ENCODE measurements at regions of chr10 and their contacts with region 1.

Region 1: DNA sequence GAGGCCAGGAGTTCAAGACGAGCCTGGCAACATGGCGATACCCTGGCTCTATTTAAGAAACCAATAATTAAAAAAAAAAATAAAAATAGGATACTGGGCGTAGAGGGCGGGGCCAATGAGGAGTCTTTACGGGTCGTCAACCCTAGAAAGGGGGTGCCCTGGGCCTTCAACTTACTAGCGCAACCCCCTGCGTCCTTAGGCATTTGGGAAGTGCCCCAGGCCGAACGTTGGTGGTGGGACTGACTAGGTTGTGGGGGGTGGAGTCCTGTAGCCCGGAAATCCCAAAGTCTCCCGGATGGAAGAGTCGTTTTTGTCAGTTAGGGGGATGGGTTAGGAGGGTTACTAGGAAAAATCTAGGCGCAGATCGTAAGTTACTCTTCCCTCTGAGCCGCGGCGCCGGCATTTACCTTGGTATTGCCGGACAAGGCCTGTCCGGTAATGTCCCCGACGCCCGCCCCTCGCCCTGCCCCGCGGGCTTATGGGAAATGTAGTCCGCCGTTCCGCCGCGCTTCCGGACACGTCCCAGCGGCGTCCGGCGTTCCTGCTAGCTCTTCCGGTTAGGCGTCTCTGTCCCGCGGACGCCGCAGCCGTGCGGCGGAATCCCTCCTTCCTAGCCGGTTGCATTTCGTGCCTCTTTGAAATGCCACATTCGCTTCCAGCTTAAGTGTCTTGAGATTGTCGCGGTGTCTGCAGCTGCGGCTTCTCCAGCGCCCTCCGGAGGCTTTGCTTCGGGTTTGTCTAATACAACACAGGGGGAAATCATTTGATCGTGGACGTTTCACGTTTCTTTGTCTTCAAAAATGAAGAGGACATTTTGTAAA is 1.3 kb upstream of the ACBD5 start:
- DNase-seq: peak; percentile 75 to 95 (median 85)
- ATAC-seq: peak; percentile 64
- H3K4me3 ChIP-seq: peak overlapping the region; percentile 87 to 96
- H3K4me3 Mint-ChIP-seq: peak overlapping the region; percentile 91
- H3K27ac ChIP-seq: peak overlapping the region; percentile 84 to 96
- H3K27ac Mint-ChIP-seq: peak overlapping the region; percentile 98
- H3K4me1 ChIP-seq: peaks cover 26% of the 10 kb centered on the region
- H3K4me1 Mint-ChIP-seq: peaks cover 43% of the 10 kb centered on the region
- H3K27me3 ChIP-seq: no peaks in the 10 kb centered on the region
- H3K27me3 Mint-ChIP-seq: no peaks in the 10 kb centered on the region
- CTCF ChIP-seq: no peak

Region 2: GRCh38 chr10:26437637-26438461 is 804.0 kb before region 1 on chr10 and contains the start of gene APBB1IP:
- CTCF ChIA-PET with region 1: no interaction called
- POLR2A ChIA-PET with region 1: no interaction called
- intact Hi-C with region 1: loop called in 1 of 2 experiments (anchors 5 kb)
- DNase-seq: peak; percentile 28 to 79 (median 57)
- ATAC-seq: peak; percentile 43
- H3K4me3 ChIP-seq: peak within 1 kb of the TSS; percentile 85 to 94
- H3K4me3 Mint-ChIP-seq: peak within 1 kb of the TSS; percentile 93
- H3K27ac ChIP-seq: peak within 1 kb of the TSS; percentile 83 to 90
- H3K27ac Mint-ChIP-seq: peak within 1 kb of the TSS; percentile 98
- H3K4me1 ChIP-seq: peaks cover 40% of the 10 kb centered on the region
- H3K4me1 Mint-ChIP-seq: peaks cover 52% of the 10 kb centered on the region
- H3K27me3 ChIP-seq: no peaks in the 10 kb centered on the region
- H3K27me3 Mint-ChIP-seq: no peaks in the 10 kb centered on the region
- CTCF ChIP-seq: no peak
- total RNA-seq, gene APBB1IP: 36.4 to 36.8 TPM

Region 3: GRCh38 chr10:26681076-26681475 is 560.8 kb before region 1 on chr10:
- CTCF ChIA-PET with region 1: no interaction called
- POLR2A ChIA-PET with region 1: no interaction called
- intact Hi-C with region 1: no loop called
- DNase-seq: no peak
- ATAC-seq: no peak
- H3K4me3 ChIP-seq: no peak overlapping the region
- H3K4me3 Mint-ChIP-seq: no peak overlapping the region
- H3K27ac ChIP-seq: no peak overlapping the region
- H3K27ac Mint-ChIP-seq: no peak overlapping the region
- H3K4me1 ChIP-seq: peaks cover 36% of the 10 kb centered on the region
- H3K4me1 Mint-ChIP-seq: peaks cover 37% of the 10 kb centered on the region
- H3K27me3 ChIP-seq: no peaks in the 10 kb centered on the region
- H3K27me3 Mint-ChIP-seq: no peaks in the 10 kb centered on the region
- CTCF ChIP-seq: no peak

Region 4: GRCh38 chr10:26697163-26697921 is 544.5 kb before region 1 on chr10 and contains the start of gene PDSS1:
- CTCF ChIA-PET with region 1: no interaction called
- POLR2A ChIA-PET with region 1: no interaction called
- intact Hi-C with region 1: loop called in 1 of 2 experiments (anchors 5 kb)
- DNase-seq: peak; percentile 23 to 82 (median 60)
- ATAC-seq: peak; percentile 73
- H3K4me3 ChIP-seq: peak within 1 kb of the TSS; percentile 85 to 92
- H3K4me3 Mint-ChIP-seq: peak within 1 kb of the TSS; percentile 94
- H3K27ac ChIP-seq: peak within 1 kb of the TSS; percentile 69 to 81
- H3K27ac Mint-ChIP-seq: peak within 1 kb of the TSS; percentile 93
- H3K4me1 ChIP-seq: peaks cover 18% of the 10 kb centered on the region
- H3K4me1 Mint-ChIP-seq: peaks cover 35% of the 10 kb centered on the region
- H3K27me3 ChIP-seq: no peaks in the 10 kb centered on the region
- H3K27me3 Mint-ChIP-seq: no peaks in the 10 kb centered on the region
- CTCF ChIP-seq: no peak
- total RNA-seq, gene PDSS1: 3.4 to 3.7 TPM

Region 5: GRCh38 chr10:27155066-27155754 is 86.7 kb before region 1 on chr10 and contains the start of gene MASTL:
- CTCF ChIA-PET with region 1: interaction called, 10 read pairs
- POLR2A ChIA-PET with region 1: interaction called, 31 read pairs
- intact Hi-C with region 1: loop called (anchors 1 kb)
- DNase-seq: peak; percentile 90 to 98 (median 93)
- ATAC-seq: peak; percentile 82
- H3K4me3 ChIP-seq: peak within 1 kb of the TSS; percentile 84 to 98
- H3K4me3 Mint-ChIP-seq: peak within 1 kb of the TSS; percentile 99
- H3K27ac ChIP-seq: peak within 1 kb of the TSS; percentile 100
- H3K27ac Mint-ChIP-seq: peak within 1 kb of the TSS; percentile 100
- H3K4me1 ChIP-seq: peaks cover 27% of the 10 kb centered on the region
- H3K4me1 Mint-ChIP-seq: peaks cover 49% of the 10 kb centered on the region
- H3K27me3 ChIP-seq: no peaks in the 10 kb centered on the region
- H3K27me3 Mint-ChIP-seq: no peaks in the 10 kb centered on the region
- CTCF ChIP-seq: no peak
- total RNA-seq, gene MASTL: 33.4 to 33.6 TPM

Region 6: DNA sequence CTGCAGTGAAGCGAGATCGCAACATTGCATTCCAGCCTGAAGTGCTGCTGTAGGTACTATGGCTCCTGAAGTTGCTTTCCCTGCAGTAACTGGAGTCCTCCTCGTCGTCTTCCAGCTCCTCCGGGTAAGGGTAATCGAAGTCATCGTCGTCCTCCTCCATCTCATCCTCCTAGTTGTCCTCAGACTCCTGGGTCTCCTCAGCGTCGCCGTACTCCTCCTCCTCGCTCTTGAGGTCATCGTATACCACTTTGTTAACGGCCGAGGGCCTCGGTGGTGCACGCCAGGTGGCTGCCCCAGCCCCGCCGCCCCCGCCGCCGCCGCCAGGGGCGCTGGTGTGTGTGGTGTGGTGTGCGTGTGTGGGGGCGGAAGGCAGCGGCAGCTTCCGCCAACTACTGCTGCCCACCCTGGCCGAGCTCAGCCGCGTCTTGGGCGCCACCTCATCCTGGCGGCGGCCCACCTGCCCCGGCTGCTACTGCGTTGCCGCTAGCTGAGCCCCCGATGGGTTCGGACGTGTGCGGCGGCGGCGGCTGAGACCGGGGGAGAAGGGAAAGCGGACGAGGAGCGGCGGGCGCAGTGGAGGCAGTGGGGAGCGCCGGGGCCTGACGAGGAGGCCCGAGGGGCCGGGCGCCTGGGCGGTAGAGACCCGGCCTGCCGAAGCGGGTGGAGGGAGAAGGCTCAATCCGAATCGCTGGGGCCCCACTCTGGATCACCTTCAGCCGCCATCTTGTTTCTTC is 10.6 kb after region 1 on chr10:
- CTCF ChIA-PET with region 1: interaction called, 18 read pairs
- POLR2A ChIA-PET with region 1: interaction called, 30 read pairs
- intact Hi-C with region 1: loop called (anchors 1 kb)
- DNase-seq: peak; percentile 58 to 92 (median 81)
- ATAC-seq: peak; percentile 86
- H3K4me3 ChIP-seq: peak overlapping the region; percentile 55 to 69
- H3K4me3 Mint-ChIP-seq: peak overlapping the region; percentile 76
- H3K27ac ChIP-seq: peak overlapping the region; percentile 60 to 75
- H3K27ac Mint-ChIP-seq: peak overlapping the region; percentile 92
- H3K4me1 ChIP-seq: peaks cover 14% of the 10 kb centered on the region
- H3K4me1 Mint-ChIP-seq: peaks cover 12% of the 10 kb centered on the region
- H3K27me3 ChIP-seq: no peaks in the 10 kb centered on the region
- H3K27me3 Mint-ChIP-seq: no peaks in the 10 kb centered on the region
- CTCF ChIP-seq: peak; percentile 84

Region 7: GRCh38 chr10:27504007-27504807 is 262.3 kb after region 1 on chr10 and contains the start of gene RAB18:
- CTCF ChIA-PET with region 1: interaction called, 7 read pairs
- POLR2A ChIA-PET with region 1: interaction called, 12 read pairs
- intact Hi-C with region 1: loop called (anchors 1 to 5 kb)
- DNase-seq: peak; percentile 94 to 99 (median 98)
- ATAC-seq: peak; percentile 95
- H3K4me3 ChIP-seq: peak within 1 kb of the TSS; percentile 73 to 82
- H3K4me3 Mint-ChIP-seq: peak within 1 kb of the TSS; percentile 99
- H3K27ac ChIP-seq: peak within 1 kb of the TSS; percentile 81 to 90
- H3K27ac Mint-ChIP-seq: peak within 1 kb of the TSS; percentile 98
- H3K4me1 ChIP-seq: peaks cover 33% of the 10 kb centered on the region
- H3K4me1 Mint-ChIP-seq: peaks cover 52% of the 10 kb centered on the region
- H3K27me3 ChIP-seq: no peaks in the 10 kb centered on the region
- H3K27me3 Mint-ChIP-seq: no peaks in the 10 kb centered on the region
- CTCF ChIP-seq: no peak
- total RNA-seq, gene RAB18: 130 to 146 TPM

Region 8: DNA sequence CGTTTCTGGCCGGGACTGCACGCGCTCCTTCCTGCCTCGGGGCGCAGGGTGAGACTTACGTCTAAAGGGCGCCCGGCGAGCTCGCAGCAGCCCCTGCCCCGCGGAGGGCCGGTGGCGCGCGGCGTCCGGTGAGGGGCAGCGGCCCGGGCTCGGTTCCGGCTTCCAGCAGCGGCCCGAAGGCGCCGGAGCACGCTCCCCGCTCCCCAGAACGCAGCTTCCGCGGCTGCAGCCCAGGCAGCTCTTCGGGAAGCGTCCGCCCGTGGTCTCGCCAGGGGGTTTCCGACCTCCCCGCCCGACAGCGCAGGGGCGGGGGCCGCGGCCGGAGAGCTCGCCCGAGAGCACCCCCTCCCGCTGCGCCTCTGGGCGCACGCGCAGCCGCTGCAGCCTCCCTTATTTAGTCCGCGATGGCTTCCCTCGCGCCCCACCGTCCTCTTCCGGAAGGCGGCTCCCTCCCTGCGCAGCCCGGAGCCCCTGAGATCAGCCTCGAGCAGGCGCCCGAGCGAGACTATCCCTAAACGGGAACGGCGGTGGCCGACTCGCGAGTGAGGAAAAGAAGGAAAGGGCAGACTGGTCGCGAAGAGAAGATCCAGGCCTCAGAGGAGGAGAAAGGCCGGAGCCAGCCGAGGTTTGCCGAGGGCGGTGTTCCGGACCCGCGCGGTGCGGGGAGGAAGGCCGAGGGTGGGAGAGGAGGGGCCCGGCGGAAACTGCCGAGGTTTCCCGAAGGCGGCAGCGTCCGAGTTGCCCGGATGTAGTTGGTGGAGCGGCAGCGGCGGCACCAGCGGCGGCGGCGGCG is 1290.7 kb after region 1 on chr10 and contains the start of gene WAC:
- CTCF ChIA-PET with region 1: no interaction called
- POLR2A ChIA-PET with region 1: no interaction called
- intact Hi-C with region 1: loop called (anchors 2 kb)
- DNase-seq: peak; percentile 94 to 99 (median 97)
- ATAC-seq: peak; percentile 79
- H3K4me3 ChIP-seq: peak within 1 kb of the TSS; percentile 74 to 99
- H3K4me3 Mint-ChIP-seq: peak within 1 kb of the TSS; percentile 99
- H3K27ac ChIP-seq: peak within 1 kb of the TSS; percentile 95 to 99
- H3K27ac Mint-ChIP-seq: peak within 1 kb of the TSS; percentile 100
- H3K4me1 ChIP-seq: peaks cover 47% of the 10 kb centered on the region
- H3K4me1 Mint-ChIP-seq: peaks cover 69% of the 10 kb centered on the region
- H3K27me3 ChIP-seq: no peaks in the 10 kb centered on the region
- H3K27me3 Mint-ChIP-seq: no peaks in the 10 kb centered on the region
- CTCF ChIP-seq: no peak
- total RNA-seq, gene WAC: 195 to 200 TPM